SK-N-SH (cell line): ENCODE measurements at regions of chr3 and their contacts with region 1.

Region 1: GRCh38 chr3:193960487-193961274 is 175.3 kb upstream of the HES1 start:
- DNase-seq: no peak
- H3K4me3 ChIP-seq: no peak overlapping the region
- H3K27ac ChIP-seq: no peak overlapping the region
- H3K4me1 ChIP-seq: peaks cover 0 to 3% of the 10 kb centered on the region in 2 experiments; a peak in 1 of 4 replicates
- H3K27me3 ChIP-seq: peaks cover 18% of the 10 kb centered on the region
- CTCF ChIP-seq: no peak
- EP300 ChIP-seq: no peak
- RAD21 ChIP-seq: no peak

Region 2: GRCh38 chr3:193971261-193971751 is 10.6 kb after region 1 on chr3:
- CTCF ChIA-PET with region 1: interaction called, 19 read pairs
- POLR2A ChIA-PET with region 1: no interaction called
- DNase-seq: no peak
- H3K4me3 ChIP-seq: no peak overlapping the region
- H3K27ac ChIP-seq: no peak overlapping the region
- H3K4me1 ChIP-seq: no peaks in the 10 kb centered on the region; a peak in 1 of 4 replicates
- H3K27me3 ChIP-seq: no peaks in the 10 kb centered on the region
- CTCF ChIP-seq: no peak
- EP300 ChIP-seq: no peak
- RAD21 ChIP-seq: no peak